ENCODE measurements at regions of chr1 and their contacts with region 1.

Region 1: DNA sequence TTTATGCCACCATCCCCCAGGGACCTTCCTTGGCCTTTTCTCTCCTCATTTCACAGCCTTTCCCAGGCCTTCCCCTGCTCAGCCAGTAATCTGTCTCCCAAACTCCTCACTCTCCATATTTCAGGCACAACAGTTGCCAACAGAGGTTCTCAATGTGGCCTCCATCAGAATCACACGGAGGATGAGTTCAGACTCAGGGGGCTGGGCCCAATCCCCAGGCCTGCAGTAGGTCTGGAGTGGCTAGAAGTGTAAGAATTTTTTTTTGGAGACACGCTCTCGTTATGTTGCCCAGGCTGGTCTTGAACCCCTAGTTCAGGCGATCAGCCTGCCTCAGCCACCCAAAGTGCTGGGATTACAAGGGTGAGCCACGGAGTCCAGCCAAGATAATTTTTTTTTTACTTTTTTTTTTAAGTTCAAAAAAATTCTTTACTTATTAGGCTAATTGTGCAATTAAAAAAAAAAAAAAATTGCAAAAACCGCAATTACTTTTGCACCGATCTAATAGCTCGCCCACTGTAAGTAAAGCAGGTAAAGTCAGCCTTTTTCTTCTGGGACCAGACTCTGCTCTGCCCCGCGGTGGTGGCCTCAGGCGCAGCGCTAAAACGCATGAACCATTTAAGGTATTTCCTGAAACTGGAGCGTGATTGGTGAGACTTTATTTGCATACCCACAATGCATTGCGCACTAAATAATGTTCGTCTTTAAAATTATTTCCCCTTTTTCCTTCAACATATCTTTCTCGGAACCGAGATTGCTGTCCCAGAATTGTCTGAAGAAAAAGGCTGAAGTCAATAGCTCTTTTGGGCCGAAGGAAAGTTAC is 18.7 kb downstream of the KIAA2013 start:
- DNase-seq: peak; percentile 91 to 98 (median 94)
- ATAC-seq: peak; percentile 88
- H3K4me3 ChIP-seq: peak overlapping the region in 1 of 2 donors; percentile 58
- H3K27ac ChIP-seq: peak overlapping the region; percentile 97 to 98
- H3K4me1 ChIP-seq: peaks cover 0 to 15% of the 10 kb centered on the region in 2 donors
- H3K27me3 ChIP-seq: no peaks in the 10 kb centered on the region
- CTCF ChIP-seq: peak; percentile 66 to 87

Region 2: DNA sequence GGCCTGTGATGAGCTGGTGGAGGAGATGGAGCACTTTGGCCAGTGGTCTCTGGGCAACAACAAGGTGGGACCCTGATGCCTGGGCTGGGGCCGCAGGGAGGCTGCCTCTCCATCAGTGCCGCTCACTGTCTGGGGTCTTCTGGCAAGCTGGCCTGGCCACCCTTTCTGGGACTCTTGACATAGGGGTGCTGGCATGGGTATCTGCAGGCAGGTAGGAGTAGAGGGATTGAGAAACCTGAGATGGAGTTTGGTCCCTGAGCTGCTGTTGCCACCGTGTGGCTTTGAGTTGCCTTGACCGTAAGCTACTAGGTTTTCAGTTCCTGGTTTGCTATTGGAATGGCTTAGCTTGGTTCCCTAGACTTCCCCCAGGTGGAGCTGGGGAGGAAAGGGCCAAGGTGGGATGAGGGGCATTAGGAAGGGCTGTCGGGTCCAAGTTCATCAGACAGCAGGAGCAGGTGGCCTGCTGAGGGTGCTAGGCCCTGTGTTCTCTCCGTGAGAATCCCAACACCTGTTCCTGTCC is 59.6 kb after region 1 on chr1:
- intact Hi-C with region 1: loop called in 1 of 2 experiments (anchors 10 kb)
- DNase-seq: peak in 1 of 4 donors; percentile 31
- ATAC-seq: peak; percentile 45
- H3K4me3 ChIP-seq: no peak overlapping the region
- H3K27ac ChIP-seq: no peak overlapping the region
- H3K4me1 ChIP-seq: no peaks in the 10 kb centered on the region
- H3K27me3 ChIP-seq: no peaks in the 10 kb centered on the region
- CTCF ChIP-seq: peak in 1 of 2 donors; percentile 33

Measured in left lung (tissue), 14 donors.